ENCODE measurements at regions of chr11 and their contacts with region 1.

Region 1: GRCh38 chr11:47426061-47426956 is at the start of gene PSMC3:
- DNase-seq: peak; percentile 90 to 99
- H3K4me3 ChIP-seq: peak within 1 kb of the TSS; percentile 74 to 97
- H3K27ac ChIP-seq: peak within 1 kb of the TSS; percentile 85 to 92
- H3K4me1 ChIP-seq: peaks cover 9 to 14% of the 10 kb centered on the region in 2 donors
- H3K27me3 ChIP-seq: no peaks in the 10 kb centered on the region
- CTCF ChIP-seq: no peak
- total RNA-seq, gene PSMC3: 34.8 TPM

Region 2: DNA sequence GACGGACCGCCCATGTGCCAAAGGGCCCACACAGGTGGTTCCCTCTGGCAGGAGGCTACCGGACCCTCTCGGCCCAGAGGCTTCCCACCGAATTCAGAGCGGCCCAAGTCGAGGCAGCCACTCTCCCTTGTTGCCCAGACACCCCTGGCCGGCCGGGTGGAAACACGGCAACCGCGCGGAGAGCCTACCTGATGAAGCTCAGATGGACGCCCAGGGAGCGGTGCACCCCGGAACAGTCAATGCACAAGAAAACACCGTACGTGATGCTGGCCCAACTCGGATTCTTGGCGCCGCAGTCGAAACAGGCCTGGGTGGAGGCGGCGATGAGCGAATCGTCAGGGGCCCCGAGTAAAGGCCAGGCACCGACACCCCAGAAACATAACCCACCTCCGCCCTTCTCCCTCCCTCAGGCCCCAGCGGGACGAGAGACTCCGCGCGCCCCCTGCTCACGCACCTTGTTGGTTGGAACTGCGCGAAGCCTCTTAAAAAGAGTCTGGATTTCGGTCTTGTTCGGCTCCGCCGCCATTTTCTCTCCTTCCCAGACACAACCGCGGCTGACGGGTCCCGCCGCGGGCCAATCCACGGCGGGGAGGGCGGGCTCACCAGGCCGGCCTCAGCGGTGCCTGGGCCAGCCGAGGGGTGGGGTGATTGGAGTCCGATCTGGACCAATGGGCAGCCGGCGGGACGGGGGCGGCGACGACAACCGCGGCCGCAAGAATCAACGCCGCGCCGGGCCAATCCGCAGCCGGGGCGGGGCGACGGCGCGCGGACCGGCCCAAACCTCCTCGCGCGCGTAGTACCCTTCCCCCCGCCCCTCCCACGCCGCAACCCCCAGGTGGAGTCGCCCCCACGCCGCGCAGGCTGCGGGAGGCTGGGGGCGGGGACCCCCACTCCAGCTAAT is 249.7 kb before region 1 on chr11 and contains the start of gene ARFGAP2:
- intact Hi-C with region 1: loop called (anchors 5 kb)
- DNase-seq: peak; percentile 89 to 98
- H3K4me3 ChIP-seq: peak within 1 kb of the TSS; percentile 98 to 99
- H3K27ac ChIP-seq: peak within 1 kb of the TSS; percentile 98 to 99
- H3K4me1 ChIP-seq: peaks cover 15 to 33% of the 10 kb centered on the region in 2 donors
- H3K27me3 ChIP-seq: no peaks in the 10 kb centered on the region
- CTCF ChIP-seq: no peak
- total RNA-seq, gene ARFGAP2: 66.1 TPM

Region 3: DNA sequence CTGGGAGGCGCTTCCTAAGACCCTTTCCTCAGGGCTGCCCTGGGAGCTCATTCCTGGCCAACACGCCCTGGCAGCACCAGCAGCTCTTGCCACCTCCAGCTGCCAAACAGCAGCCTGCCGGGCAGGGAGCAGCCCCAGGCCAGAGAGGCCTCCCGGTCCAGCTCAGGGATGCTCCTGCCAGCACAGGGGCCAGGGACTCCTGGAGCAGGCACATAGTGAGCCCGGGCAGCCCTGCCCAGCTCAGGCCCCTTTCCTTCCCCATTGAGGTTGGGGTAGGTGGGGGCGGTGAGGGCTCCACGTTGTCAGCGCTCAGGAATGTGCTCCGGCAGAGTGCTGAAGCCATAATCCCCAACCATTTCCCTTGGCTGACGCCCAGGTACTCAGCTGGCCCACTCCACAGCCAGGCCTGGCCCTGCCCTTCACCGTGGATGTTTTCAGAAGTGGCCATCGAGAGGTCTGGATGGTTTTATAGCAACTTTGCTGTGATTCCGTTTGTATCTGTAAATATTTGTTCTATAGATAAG is 10.3 kb before region 1 on chr11:
- intact Hi-C with region 1: loop called (anchors 1 kb)
- DNase-seq: peak; percentile 60 to 95
- H3K4me3 ChIP-seq: peak overlapping the region in 1 of 2 donors; percentile 12
- H3K27ac ChIP-seq: peak overlapping the region; percentile 85 to 91
- H3K4me1 ChIP-seq: peaks cover 11 to 31% of the 10 kb centered on the region in 2 donors
- H3K27me3 ChIP-seq: no peaks in the 10 kb centered on the region
- CTCF ChIP-seq: no peak

Measured in ascending aorta (tissue), 2 donors.